CD8-positive, alpha-beta T cell (primary cell): ENCODE measurements at regions of chr7 and their contacts with region 1.

Region 1: DNA sequence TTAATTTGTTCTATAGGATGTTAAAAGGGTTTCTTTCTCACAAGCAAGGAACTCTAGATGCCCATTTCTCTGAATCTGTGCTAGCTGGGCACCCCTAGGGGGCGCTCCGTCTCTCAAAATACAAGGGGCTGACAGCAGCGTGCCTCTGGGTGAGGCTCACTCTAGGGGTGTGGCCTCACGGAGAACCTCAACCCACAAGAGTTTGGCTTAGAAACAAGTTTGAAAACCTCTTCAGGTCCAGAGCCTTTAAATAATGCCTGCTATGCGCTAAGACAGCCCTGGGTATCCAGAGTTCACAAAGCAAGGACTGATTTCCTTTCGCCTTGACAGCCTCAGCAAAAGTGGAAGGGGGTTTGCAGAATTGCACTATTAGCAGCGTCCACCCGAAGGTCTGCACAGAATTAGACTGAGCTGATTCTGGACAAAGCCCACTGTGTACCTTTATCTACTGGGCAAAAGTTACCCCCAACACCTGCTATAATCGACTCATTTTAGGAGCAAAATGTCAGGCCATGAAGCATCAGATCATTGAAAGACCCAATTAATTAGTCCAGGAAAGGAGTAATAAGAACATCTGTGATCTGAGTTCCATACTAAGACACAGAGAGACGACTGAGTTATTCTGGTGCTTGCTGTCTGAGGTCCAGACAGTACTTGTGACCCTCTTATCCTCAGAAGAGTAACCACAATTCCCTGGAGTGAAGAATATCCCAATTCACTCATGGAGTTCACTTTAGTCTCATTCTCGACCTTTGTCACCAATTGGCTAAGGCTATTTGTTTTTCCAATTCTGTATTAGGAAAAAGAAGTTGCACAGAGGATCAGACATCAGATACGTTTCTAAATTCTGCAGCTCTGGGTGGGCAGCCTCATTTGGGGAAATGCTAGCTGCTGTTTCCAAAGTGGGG is 574 bp upstream of the CPED1 start:
- DNase-seq: peak; percentile 67 to 92 (median 87)
- ATAC-seq: peak; percentile 99
- H3K4me3 ChIP-seq: peak overlapping the region in 1 of 2 experiments; percentile 6
- H3K4me3 Mint-ChIP-seq: peak overlapping the region; percentile 75
- H3K27ac ChIP-seq: no peak overlapping the region
- H3K27ac Mint-ChIP-seq: no peak overlapping the region
- H3K4me1 ChIP-seq: peaks cover 13% of the 10 kb centered on the region
- H3K4me1 Mint-ChIP-seq: peaks cover 18% of the 10 kb centered on the region
- H3K27me3 ChIP-seq: peaks cover 21 to 29% of the 10 kb centered on the region in 2 experiments
- H3K27me3 Mint-ChIP-seq: peaks cover 56% of the 10 kb centered on the region
- CTCF ChIP-seq: peak; percentile 98

Region 2: GRCh38 chr7:119228482-119228881 is 1759.5 kb before region 1 on chr7:
- CTCF ChIA-PET with region 1: no interaction called
- POLR2A ChIA-PET with region 1: no interaction called
- intact Hi-C with region 1: no loop called
- DNase-seq: no peak
- ATAC-seq: no peak
- H3K4me3 ChIP-seq: no peak overlapping the region
- H3K4me3 Mint-ChIP-seq: no peak overlapping the region
- H3K27ac ChIP-seq: no peak overlapping the region
- H3K27ac Mint-ChIP-seq: no peak overlapping the region
- H3K4me1 ChIP-seq: no peaks in the 10 kb centered on the region
- H3K4me1 Mint-ChIP-seq: no peaks in the 10 kb centered on the region
- H3K27me3 ChIP-seq: no peaks in the 10 kb centered on the region
- H3K27me3 Mint-ChIP-seq: no peaks in the 10 kb centered on the region
- CTCF ChIP-seq: no peak

Region 3: GRCh38 chr7:120539321-120539720 is 448.6 kb before region 1 on chr7:
- CTCF ChIA-PET with region 1: no interaction called
- POLR2A ChIA-PET with region 1: no interaction called
- intact Hi-C with region 1: no loop called
- DNase-seq: no peak
- ATAC-seq: no peak
- H3K4me3 ChIP-seq: no peak overlapping the region
- H3K4me3 Mint-ChIP-seq: no peak overlapping the region
- H3K27ac ChIP-seq: no peak overlapping the region
- H3K27ac Mint-ChIP-seq: no peak overlapping the region
- H3K4me1 ChIP-seq: no peaks in the 10 kb centered on the region
- H3K4me1 Mint-ChIP-seq: no peaks in the 10 kb centered on the region
- H3K27me3 ChIP-seq: no peaks in the 10 kb centered on the region
- H3K27me3 Mint-ChIP-seq: no peaks in the 10 kb centered on the region
- CTCF ChIP-seq: no peak

Region 4: DNA sequence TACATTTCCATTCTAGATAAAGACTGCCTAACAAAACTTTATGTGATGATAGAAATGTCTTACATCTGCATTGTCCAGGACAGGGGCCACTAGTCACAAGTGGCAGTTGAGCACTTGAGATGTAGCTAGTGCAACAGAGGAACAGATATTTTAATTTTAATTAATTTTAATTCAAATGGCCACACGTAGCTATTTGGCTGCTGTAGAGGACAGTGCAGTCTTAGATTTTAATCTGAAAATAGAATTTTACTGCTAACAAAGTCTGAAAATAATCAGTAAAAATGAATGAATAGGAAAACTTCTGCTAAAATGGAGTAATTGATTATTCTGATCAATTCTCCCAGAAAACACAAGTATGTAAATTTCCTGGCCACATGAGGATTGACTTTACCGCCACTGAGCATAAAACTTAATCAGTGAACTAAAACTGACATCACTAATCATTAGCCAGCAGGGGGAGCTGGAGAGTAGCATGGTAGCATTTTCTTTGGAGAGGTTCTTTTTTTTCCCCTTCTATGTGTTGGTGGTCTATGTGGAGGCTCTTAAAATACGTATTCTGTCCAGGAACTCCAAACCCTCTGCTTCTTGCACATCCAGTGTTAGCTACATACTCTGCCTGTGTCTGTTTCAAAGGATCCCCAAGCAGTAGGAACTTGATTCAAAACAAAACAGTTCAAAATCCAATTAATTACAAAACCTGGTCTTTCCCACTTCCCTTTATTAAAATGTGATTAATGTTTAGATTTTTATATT is 182.1 kb before region 1 on chr7:
- CTCF ChIA-PET with region 1: interaction called, 8 read pairs
- POLR2A ChIA-PET with region 1: no interaction called
- intact Hi-C with region 1: loop called in 1 of 2 experiments (anchors 2 kb)
- DNase-seq: peak in 8 of 9 experiments; percentile 12 to 68 (median 53)
- ATAC-seq: no peak
- H3K4me3 ChIP-seq: no peak overlapping the region
- H3K4me3 Mint-ChIP-seq: no peak overlapping the region
- H3K27ac ChIP-seq: no peak overlapping the region
- H3K27ac Mint-ChIP-seq: no peak overlapping the region
- H3K4me1 ChIP-seq: no peaks in the 10 kb centered on the region
- H3K4me1 Mint-ChIP-seq: no peaks in the 10 kb centered on the region
- H3K27me3 ChIP-seq: no peaks in the 10 kb centered on the region
- H3K27me3 Mint-ChIP-seq: peaks cover 22% of the 10 kb centered on the region
- CTCF ChIP-seq: peak; percentile 90

Region 5: DNA sequence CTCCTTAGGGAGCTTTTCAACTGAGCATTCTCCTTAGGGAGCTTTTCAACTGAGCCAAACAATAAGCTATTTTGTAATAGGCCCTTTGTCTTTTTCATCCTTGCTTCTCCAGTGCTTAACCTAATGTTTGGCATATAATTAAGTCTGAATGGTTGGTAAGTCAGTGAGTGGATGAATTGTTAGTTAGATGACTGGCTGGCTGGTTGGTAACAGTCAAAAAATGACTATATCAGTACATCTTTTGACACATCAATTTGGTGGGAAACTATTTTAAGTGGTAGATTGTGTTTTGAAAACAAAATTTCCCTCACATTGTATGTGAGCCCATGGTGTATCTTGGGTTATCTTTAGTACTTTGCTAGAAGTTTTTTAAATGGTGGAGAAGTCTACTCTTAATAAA is 21.0 kb before region 1 on chr7:
- CTCF ChIA-PET with region 1: interaction called, 13 read pairs
- POLR2A ChIA-PET with region 1: no interaction called
- intact Hi-C with region 1: no loop called
- DNase-seq: no peak
- ATAC-seq: no peak
- H3K4me3 ChIP-seq: no peak overlapping the region
- H3K4me3 Mint-ChIP-seq: no peak overlapping the region
- H3K27ac ChIP-seq: no peak overlapping the region
- H3K27ac Mint-ChIP-seq: no peak overlapping the region
- H3K4me1 ChIP-seq: no peaks in the 10 kb centered on the region
- H3K4me1 Mint-ChIP-seq: peaks cover 7% of the 10 kb centered on the region
- H3K27me3 ChIP-seq: no peaks in the 10 kb centered on the region
- H3K27me3 Mint-ChIP-seq: no peaks in the 10 kb centered on the region
- CTCF ChIP-seq: no peak

Region 6: GRCh38 chr7:121081327-121081936 is 93.5 kb after region 1 on chr7:
- CTCF ChIA-PET with region 1: interaction called, 123 read pairs
- POLR2A ChIA-PET with region 1: no interaction called
- intact Hi-C with region 1: loop called (anchors 1 kb)
- DNase-seq: peak in 2 of 9 experiments; percentile 48 to 61
- ATAC-seq: peak; percentile 72
- H3K4me3 ChIP-seq: no peak overlapping the region
- H3K4me3 Mint-ChIP-seq: no peak overlapping the region
- H3K27ac ChIP-seq: no peak overlapping the region
- H3K27ac Mint-ChIP-seq: no peak overlapping the region
- H3K4me1 ChIP-seq: no peaks in the 10 kb centered on the region
- H3K4me1 Mint-ChIP-seq: no peaks in the 10 kb centered on the region
- H3K27me3 ChIP-seq: no peaks in the 10 kb centered on the region
- H3K27me3 Mint-ChIP-seq: peaks cover 10% of the 10 kb centered on the region
- CTCF ChIP-seq: peak; percentile 76

Region 7: GRCh38 chr7:121547544-121548092 is 559.7 kb after region 1 on chr7:
- CTCF ChIA-PET with region 1: no interaction called
- POLR2A ChIA-PET with region 1: no interaction called
- intact Hi-C with region 1: loop called (anchors 1 to 10 kb)
- DNase-seq: peak in 2 of 9 experiments; percentile 67 to 75
- ATAC-seq: peak; percentile 85
- H3K4me3 ChIP-seq: no peak overlapping the region
- H3K4me3 Mint-ChIP-seq: no peak overlapping the region
- H3K27ac ChIP-seq: no peak overlapping the region
- H3K27ac Mint-ChIP-seq: no peak overlapping the region
- H3K4me1 ChIP-seq: no peaks in the 10 kb centered on the region
- H3K4me1 Mint-ChIP-seq: peaks cover 7% of the 10 kb centered on the region
- H3K27me3 ChIP-seq: no peaks in the 10 kb centered on the region
- H3K27me3 Mint-ChIP-seq: no peaks in the 10 kb centered on the region
- CTCF ChIP-seq: peak; percentile 85